Heart left ventricle (tissue), 16 donors: ENCODE measurements at regions of chr6 and their contacts with region 1.

Region 1: DNA sequence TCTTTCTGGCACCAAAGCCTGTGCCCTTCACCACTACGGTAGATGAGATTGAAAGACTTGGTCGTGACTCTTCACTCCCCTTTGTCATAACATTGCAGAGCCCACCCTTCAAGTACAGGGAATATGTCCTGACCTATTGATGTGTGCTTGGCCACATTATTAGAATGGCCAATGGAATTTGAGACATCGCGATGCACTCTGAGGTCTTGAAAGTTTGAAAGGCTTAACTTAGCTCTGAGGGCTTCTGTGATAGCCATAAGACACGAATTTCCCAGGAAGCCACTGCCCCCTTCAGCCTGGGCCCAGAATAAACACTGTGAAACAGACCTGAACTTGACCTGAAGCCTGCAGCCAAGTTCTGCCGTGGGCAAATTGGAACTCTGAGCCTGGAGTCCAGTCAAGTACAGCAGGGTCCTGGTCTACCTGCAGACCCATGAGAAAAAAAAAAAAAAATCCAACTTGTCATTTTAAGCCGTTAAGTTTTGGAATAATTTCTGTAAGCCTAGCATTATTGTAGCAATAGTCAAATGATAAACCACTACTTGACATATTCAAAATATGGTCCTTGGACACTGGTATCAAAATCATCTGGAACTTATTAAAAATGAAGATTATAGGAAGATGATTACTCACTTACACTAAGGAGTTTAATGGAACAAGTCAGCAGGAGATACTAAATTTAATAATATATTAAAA is 36.9 kb upstream of the TRAF3IP2 start:
- DNase-seq: peak in 4 of 5 donors; percentile 61 to 75 (median 68)
- ATAC-seq: peak; percentile 88 to 96 (median 94)
- H3K4me3 ChIP-seq: peak overlapping the region in 1 of 12 donors; percentile 7
- H3K27ac ChIP-seq: no peak overlapping the region
- H3K4me1 ChIP-seq: peaks cover 0 to 11% (median 0%) of the 10 kb centered on the region in 12 donors
- H3K27me3 ChIP-seq: no peaks in the 10 kb centered on the region
- CTCF ChIP-seq: peak; percentile 40 to 80 (median 74)
- POLR2A ChIP-seq: no peak

Region 2: GRCh38 chr6:111259089-111259831 is 383.4 kb before region 1 on chr6:
- intact Hi-C with region 1: loop called in 8 of 10 experiments (anchors 1 to 10 kb)
- DNase-seq: peak; percentile 98 to 99 (median 99)
- ATAC-seq: peak; percentile 98 to 99 (median 99)
- H3K4me3 ChIP-seq: peak overlapping the region; percentile 50 to 94 (median 68)
- H3K27ac ChIP-seq: peak overlapping the region; percentile 33 to 94 (median 82)
- H3K4me1 ChIP-seq: peaks cover 0 to 22% (median 13%) of the 10 kb centered on the region in 12 donors
- H3K27me3 ChIP-seq: peaks cover 0 to 9% (median 0%) of the 10 kb centered on the region in 9 donors
- CTCF ChIP-seq: peak; percentile 90 to 99 (median 95)
- POLR2A ChIP-seq: peak in 1 of 2 donors; percentile 61

Region 3: DNA sequence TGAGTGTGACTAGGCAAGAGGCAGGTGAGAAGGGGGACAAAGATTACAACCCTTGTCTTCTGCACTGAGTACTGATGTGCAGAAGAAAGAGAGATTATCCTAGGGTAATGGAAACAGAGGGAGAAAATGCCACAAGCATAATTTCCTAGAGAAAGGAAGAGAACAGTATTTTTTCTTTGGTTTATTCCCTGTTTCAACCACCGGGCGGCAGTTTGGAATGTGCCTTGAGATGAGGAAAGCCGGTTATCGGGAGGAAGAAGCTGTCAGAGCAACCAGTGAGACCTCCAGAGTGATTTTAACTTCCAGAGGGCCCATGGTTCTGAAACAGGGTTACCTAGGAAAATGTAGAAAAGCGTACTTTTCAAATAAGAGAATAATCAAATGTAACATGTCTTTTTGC is 281.0 kb before region 1 on chr6:
- intact Hi-C with region 1: loop called (anchors 2 to 10 kb)
- DNase-seq: peak in 1 of 5 donors; percentile 22
- ATAC-seq: peak in 1 of 4 donors; percentile 69
- H3K4me3 ChIP-seq: no peak overlapping the region
- H3K27ac ChIP-seq: no peak overlapping the region
- H3K4me1 ChIP-seq: peaks cover 0 to 8% (median 0%) of the 10 kb centered on the region in 12 donors
- H3K27me3 ChIP-seq: no peaks in the 10 kb centered on the region
- CTCF ChIP-seq: peak in 10 of 12 donors; percentile 21 to 61 (median 47)
- POLR2A ChIP-seq: no peak

Region 4: GRCh38 chr6:111417181-111417585 is 225.4 kb before region 1 on chr6:
- intact Hi-C with region 1: loop called in 1 of 10 experiments (anchors 5 kb)
- DNase-seq: peak in 4 of 5 donors; percentile 31 to 40 (median 35)
- ATAC-seq: peak; percentile 88 to 95 (median 92)
- H3K4me3 ChIP-seq: no peak overlapping the region
- H3K27ac ChIP-seq: peak overlapping the region in 6 of 12 donors; percentile 0 to 29 (median 6)
- H3K4me1 ChIP-seq: peaks cover 0 to 36% (median 27%) of the 10 kb centered on the region in 12 donors
- H3K27me3 ChIP-seq: no peaks in the 10 kb centered on the region
- CTCF ChIP-seq: no peak
- POLR2A ChIP-seq: no peak

Region 5: GRCh38 chr6:111478749-111479148 is 163.9 kb before region 1 on chr6:
- intact Hi-C with region 1: loop called in 5 of 10 experiments (anchors 1 to 10 kb)
- DNase-seq: no peak
- ATAC-seq: peak in 1 of 4 donors; percentile 15
- H3K4me3 ChIP-seq: no peak overlapping the region
- H3K27ac ChIP-seq: peak overlapping the region in 2 of 12 donors; percentile 4 to 38
- H3K4me1 ChIP-seq: peaks cover 0 to 55% (median 35%) of the 10 kb centered on the region in 12 donors
- H3K27me3 ChIP-seq: no peaks in the 10 kb centered on the region
- CTCF ChIP-seq: peak in 9 of 12 donors; percentile 9 to 56 (median 35)
- POLR2A ChIP-seq: no peak

Region 6: GRCh38 chr6:111591104-111591900 is 51.3 kb before region 1 on chr6:
- intact Hi-C with region 1: no loop called
- DNase-seq: peak in 4 of 5 donors; percentile 44 to 92 (median 81)
- ATAC-seq: peak; percentile 53 to 92 (median 76)
- H3K4me3 ChIP-seq: no peak overlapping the region
- H3K27ac ChIP-seq: peak overlapping the region in 8 of 12 donors; percentile 17 to 84 (median 48)
- H3K4me1 ChIP-seq: peaks cover 0 to 52% (median 43%) of the 10 kb centered on the region in 12 donors
- H3K27me3 ChIP-seq: no peaks in the 10 kb centered on the region
- CTCF ChIP-seq: no peak
- POLR2A ChIP-seq: no peak

Region 7: DNA sequence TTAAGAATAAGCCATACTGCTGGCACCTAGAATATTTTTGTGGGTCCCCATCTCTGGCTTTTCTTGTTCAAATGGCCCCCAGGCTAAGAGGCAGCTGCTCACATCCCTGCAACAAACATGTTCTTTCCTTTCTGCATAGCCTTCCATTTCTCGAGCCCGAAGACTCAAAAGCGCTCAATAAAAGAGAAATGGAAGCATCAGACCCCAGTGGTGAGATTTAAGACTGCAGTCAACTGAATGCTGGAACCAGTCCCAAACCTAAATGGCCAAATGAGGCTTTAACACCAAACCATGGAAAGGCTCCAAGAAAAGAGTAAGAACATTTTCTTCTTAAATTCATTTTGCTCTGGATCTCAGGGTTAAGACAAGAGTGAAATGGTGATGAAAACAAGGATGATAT is 85.2 kb after region 1 on chr6:
- intact Hi-C with region 1: no loop called
- DNase-seq: no peak
- ATAC-seq: no peak
- H3K4me3 ChIP-seq: no peak overlapping the region
- H3K27ac ChIP-seq: no peak overlapping the region
- H3K4me1 ChIP-seq: peaks cover 0 to 62% (median 44%) of the 10 kb centered on the region in 12 donors
- H3K27me3 ChIP-seq: no peaks in the 10 kb centered on the region
- CTCF ChIP-seq: peak in 10 of 12 donors; percentile 16 to 52 (median 33)
- POLR2A ChIP-seq: no peak

Region 8: DNA sequence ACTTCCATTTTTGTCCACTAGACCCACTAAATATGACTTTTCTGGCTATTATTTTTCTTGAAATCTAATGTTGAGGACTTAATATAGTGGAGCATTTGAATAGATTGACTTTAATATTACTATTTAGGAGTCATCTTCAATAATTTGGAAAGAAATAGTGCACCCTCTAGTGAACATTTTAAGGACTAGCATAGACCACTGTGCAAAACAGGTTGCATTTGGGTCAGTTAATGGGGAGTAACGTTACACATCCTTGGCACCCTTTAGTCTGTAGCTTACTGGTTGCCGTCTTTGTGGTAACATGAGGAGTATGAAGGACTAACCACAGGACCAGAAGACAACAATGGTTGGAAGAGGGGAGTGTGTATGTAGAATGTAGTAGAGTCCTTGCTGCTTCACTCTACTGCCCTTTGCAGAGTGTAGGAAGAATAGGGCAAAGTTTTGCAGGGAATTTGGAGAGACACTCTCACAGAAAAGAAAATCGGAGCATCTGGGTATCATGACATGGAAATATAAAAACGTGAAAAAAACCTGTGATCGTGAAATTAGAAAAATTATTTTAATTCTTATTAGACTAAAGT is 729.7 kb after region 1 on chr6:
- intact Hi-C with region 1: no loop called
- DNase-seq: no peak
- ATAC-seq: peak in 3 of 4 donors; percentile 48 to 51 (median 48)
- H3K4me3 ChIP-seq: no peak overlapping the region
- H3K27ac ChIP-seq: no peak overlapping the region
- H3K4me1 ChIP-seq: peaks cover 0 to under 1% (median 0%) of the 10 kb centered on the region in 12 donors
- H3K27me3 ChIP-seq: peaks cover 0 to 9% (median under 1%) of the 10 kb centered on the region in 9 donors
- CTCF ChIP-seq: peak in 11 of 12 donors; percentile 25 to 63 (median 47)
- POLR2A ChIP-seq: no peak